ENCODE measurements at regions of chr4 and their contacts with region 1.

Region 1: DNA sequence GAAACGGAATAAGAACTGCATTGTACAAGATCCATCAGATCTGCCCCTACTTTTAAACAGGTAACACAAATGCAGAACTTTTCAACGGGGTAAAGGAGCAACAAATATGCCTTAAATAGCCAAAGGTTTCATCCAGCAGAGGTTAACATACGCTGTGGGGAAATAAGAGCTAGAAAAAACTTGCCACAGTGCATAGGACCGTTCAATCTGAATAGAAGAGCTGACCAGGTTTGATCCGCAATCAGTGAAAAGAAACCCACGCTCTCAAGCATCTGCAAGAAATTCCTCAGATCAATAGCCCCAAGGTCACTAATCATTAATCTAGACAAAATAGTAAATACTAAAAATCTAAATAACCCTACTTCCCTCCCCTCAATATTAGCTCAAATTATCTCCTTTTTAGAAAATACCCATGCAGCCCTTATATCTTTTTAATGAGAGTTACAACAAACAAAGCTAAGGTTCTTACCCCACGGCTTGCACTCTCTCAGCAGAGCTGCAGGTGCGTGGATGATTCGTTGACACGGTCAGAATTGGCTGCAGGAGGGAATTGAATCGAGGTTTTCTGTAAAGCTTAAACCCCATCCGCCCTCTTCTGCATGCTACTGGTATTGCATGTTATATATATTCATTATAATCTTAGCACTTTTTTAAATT is at the start of gene TLR10:
- DNase-seq: no peak
- H3K4me3 ChIP-seq: no peak within 1 kb of the TSS
- H3K27ac ChIP-seq: no peak within 1 kb of the TSS
- H3K4me1 ChIP-seq: no peaks in the 10 kb centered on the region
- H3K27me3 ChIP-seq: no peaks in the 10 kb centered on the region
- CTCF ChIP-seq: peak; percentile 42 to 70 (median 62)
- total RNA-seq, gene TLR10: not detected

Region 2: DNA sequence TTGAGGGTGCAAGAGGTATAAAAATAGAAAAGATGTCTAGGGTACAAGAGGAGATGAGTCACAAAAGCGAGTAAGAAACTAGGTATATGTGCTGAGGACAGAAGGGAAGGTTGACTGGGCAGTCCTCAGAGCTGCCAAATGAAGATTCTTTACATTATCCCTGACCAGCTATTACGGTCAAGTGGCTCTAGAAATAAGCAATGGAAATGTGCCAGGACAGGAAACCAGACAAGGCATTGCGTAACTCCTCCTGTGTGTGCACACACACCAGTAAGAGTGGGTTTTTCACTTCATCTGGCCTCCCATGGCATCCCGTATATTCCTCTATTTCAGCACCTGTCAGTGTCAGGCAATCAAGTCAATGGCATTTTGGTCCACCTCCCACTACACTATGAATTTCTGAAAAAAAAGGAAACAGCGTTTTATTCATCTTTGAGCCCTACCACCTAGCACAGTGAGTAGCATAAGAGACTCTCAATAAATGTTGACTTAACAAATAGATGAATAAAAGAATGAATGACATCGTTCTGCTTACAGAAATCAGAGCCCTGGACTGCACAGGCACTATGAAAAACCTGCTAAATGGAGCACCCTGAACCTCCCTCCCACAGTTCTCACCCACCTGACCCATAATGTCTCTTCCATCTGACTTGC is 181.2 kb before region 1 on chr4:
- intact Hi-C with region 1: loop called (anchors 5 kb)
- DNase-seq: no peak
- H3K4me3 ChIP-seq: no peak overlapping the region
- H3K27ac ChIP-seq: no peak overlapping the region
- H3K4me1 ChIP-seq: no peaks in the 10 kb centered on the region
- H3K27me3 ChIP-seq: no peaks in the 10 kb centered on the region
- CTCF ChIP-seq: no peak